ENCODE measurements at regions of chr13 and their contacts with region 1.

Region 1: DNA sequence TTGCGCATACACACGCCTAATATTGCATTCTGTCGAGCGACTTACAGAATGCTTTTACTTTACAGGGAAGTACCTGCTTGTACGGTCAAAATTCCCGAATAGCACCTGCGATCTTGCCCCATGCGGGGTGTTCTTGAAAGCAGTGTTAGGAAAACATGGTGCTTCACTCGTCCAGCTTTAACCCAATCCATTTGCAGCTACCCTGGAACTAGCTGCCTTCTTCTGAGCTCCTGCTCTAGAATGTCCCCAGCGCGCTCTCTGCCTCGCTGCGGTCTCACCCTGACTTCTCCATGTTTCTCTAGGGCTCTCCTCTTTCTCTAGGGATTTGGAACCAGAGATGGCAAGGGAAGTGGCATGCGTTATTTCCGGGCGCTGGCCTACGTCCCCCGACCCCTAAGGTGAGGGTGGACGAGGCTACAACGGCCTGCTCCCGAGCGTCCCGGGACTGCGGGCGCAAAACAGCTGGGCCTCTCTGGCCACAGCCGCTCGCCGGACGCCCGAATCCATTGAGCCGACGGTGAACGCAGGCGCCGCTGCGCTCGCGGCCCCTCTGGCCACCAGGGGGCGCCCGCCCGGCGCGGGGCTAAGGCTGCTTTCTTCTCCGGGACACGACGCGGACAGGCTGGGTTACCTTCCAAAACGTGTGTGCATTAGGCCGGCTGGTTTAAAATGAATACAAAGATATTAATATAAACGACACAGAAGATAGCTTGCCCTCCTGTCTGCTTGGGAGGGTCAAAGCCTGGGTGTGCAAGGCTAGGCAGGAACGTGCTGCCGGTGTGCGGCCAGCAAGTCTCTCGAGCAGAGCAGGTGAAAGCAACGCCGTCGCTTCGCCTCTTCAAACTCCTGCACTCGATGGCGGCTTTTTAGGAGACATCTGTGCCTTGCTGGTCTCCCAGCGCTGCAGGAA is 1.8 kb upstream of the SPRY2 start:
- DNase-seq: peak; percentile 83
- H3K4me3 ChIP-seq: peak overlapping the region; percentile 30 to 77 (median 75)
- H3K27ac ChIP-seq: peak overlapping the region; percentile 82
- H3K4me1 ChIP-seq: peaks cover 17% of the 10 kb centered on the region
- H3K27me3 ChIP-seq: no peaks in the 10 kb centered on the region
- CTCF ChIP-seq: peak; percentile 97 to 98
- POLR2A ChIP-seq: no peak

Region 2: DNA sequence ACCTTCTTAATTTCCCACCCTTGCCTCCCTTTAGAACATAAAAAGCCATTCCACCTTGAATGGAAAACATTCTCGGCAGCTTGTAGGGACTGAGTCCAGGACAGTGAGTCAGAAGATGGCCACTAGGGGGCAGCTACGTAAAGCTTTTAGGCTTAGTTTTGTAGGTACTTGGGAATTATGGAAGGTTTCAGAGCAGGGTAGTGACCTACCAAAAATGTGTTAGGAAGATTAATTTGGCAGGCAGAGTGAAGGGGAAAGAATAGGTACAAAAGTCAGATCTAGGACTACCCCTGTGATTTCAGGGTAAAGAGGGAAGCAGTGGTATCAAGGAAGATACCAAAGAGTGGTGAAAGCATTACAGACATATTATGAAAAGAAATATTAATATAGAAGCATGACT is 663.4 kb before region 1 on chr13:
- CTCF ChIA-PET with region 1: interaction called, 49 read pairs
- POLR2A ChIA-PET with region 1: no interaction called
- dilution Hi-C with region 1: no loop called
- intact Hi-C with region 1: loop called (anchors 1 kb)
- DNase-seq: peak; percentile 83
- H3K4me3 ChIP-seq: no peak overlapping the region
- H3K27ac ChIP-seq: no peak overlapping the region
- H3K4me1 ChIP-seq: no peaks in the 10 kb centered on the region
- H3K27me3 ChIP-seq: no peaks in the 10 kb centered on the region
- CTCF ChIP-seq: peak; percentile 70 to 80
- POLR2A ChIP-seq: no peak

Region 3: GRCh38 chr13:79812070-79812850 is 530.5 kb before region 1 on chr13:
- CTCF ChIA-PET with region 1: interaction called, 4 read pairs
- POLR2A ChIA-PET with region 1: no interaction called
- dilution Hi-C with region 1: no loop called
- intact Hi-C with region 1: loop called (anchors 1 kb)
- DNase-seq: no peak
- H3K4me3 ChIP-seq: no peak overlapping the region
- H3K27ac ChIP-seq: no peak overlapping the region
- H3K4me1 ChIP-seq: peaks cover 27% of the 10 kb centered on the region
- H3K27me3 ChIP-seq: no peaks in the 10 kb centered on the region
- CTCF ChIP-seq: no peak
- POLR2A ChIP-seq: no peak

Region 4: DNA sequence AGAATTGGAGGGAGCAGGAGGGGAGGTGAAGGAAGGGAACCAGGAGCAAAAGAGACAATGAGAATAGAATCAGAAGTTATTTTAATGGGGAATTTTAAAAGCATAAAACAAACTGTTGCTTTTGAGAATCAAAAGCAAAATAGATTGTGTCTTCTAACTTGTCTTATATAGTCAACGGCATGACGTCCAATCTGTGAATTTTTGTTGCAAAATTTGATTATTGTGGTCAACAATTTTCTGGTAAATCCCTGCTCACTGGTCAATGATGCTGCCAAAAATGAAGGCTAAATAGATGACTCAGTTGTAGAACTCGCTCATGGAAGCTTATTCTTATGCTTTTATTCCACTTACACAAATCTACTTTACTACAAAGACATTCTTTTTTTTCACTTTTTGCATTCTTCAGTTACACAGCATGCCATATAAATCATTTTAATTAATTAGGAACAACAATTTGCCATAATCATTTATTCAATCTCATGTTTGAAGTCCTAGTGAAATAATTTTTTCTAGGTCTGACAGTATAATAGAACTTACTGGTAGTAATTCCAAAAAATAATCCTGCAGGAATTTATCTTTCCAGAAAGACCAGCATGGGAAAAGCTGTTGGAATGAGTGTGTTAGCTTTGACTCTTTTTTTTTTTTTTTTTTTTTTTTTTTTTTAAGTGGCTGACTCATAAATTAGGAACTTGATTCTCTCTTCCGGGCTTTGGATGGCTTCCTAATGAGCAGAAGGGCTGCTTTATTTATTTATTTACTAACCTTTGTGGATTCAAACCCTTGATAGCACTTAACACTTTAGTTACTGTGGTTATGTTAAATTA is 258.7 kb before region 1 on chr13:
- CTCF ChIA-PET with region 1: no interaction called
- POLR2A ChIA-PET with region 1: interaction called, 3 read pairs
- dilution Hi-C with region 1: no loop called
- intact Hi-C with region 1: loop called (anchors 1 kb)
- DNase-seq: peak; percentile 75
- H3K4me3 ChIP-seq: peak overlapping the region in 1 of 3 experiments; percentile 52
- H3K27ac ChIP-seq: peak overlapping the region; percentile 97
- H3K4me1 ChIP-seq: peaks cover 27% of the 10 kb centered on the region
- H3K27me3 ChIP-seq: no peaks in the 10 kb centered on the region
- CTCF ChIP-seq: no peak
- POLR2A ChIP-seq: no peak

Region 5: GRCh38 chr13:80363890-80364503 is 21.3 kb after region 1 on chr13:
- CTCF ChIA-PET with region 1: interaction called, 45 read pairs
- POLR2A ChIA-PET with region 1: interaction called, 4 read pairs
- dilution Hi-C with region 1: no loop called
- intact Hi-C with region 1: loop called (anchors 1 kb)
- DNase-seq: peak; percentile 46
- H3K4me3 ChIP-seq: peak overlapping the region in 1 of 3 experiments; percentile 34
- H3K27ac ChIP-seq: no peak overlapping the region
- H3K4me1 ChIP-seq: peaks cover 5% of the 10 kb centered on the region
- H3K27me3 ChIP-seq: no peaks in the 10 kb centered on the region
- CTCF ChIP-seq: peak; percentile 62 to 65
- POLR2A ChIP-seq: no peak

Region 6: GRCh38 chr13:80923907-80924306 is 581.2 kb after region 1 on chr13:
- CTCF ChIA-PET with region 1: interaction called, 18 read pairs
- POLR2A ChIA-PET with region 1: no interaction called
- dilution Hi-C with region 1: no loop called
- intact Hi-C with region 1: loop called (anchors 1 kb)
- DNase-seq: peak; percentile 22
- H3K4me3 ChIP-seq: no peak overlapping the region
- H3K27ac ChIP-seq: peak overlapping the region; percentile 65
- H3K4me1 ChIP-seq: peaks cover 27% of the 10 kb centered on the region
- H3K27me3 ChIP-seq: no peaks in the 10 kb centered on the region
- CTCF ChIP-seq: no peak
- POLR2A ChIP-seq: no peak

Region 7: GRCh38 chr13:81017513-81018152 is 674.9 kb after region 1 on chr13:
- CTCF ChIA-PET with region 1: interaction called, 120 read pairs
- POLR2A ChIA-PET with region 1: no interaction called
- dilution Hi-C with region 1: no loop called
- intact Hi-C with region 1: loop called (anchors 1 kb)
- DNase-seq: peak; percentile 57
- H3K4me3 ChIP-seq: no peak overlapping the region
- H3K27ac ChIP-seq: no peak overlapping the region
- H3K4me1 ChIP-seq: peaks cover 2% of the 10 kb centered on the region
- H3K27me3 ChIP-seq: no peaks in the 10 kb centered on the region
- CTCF ChIP-seq: peak; percentile 19 to 29
- POLR2A ChIP-seq: no peak

Measured in endothelial cell of umbilical vein (primary cell).